ENCODE measurements at regions of chr2 and their contacts with region 1.

Region 1: DNA sequence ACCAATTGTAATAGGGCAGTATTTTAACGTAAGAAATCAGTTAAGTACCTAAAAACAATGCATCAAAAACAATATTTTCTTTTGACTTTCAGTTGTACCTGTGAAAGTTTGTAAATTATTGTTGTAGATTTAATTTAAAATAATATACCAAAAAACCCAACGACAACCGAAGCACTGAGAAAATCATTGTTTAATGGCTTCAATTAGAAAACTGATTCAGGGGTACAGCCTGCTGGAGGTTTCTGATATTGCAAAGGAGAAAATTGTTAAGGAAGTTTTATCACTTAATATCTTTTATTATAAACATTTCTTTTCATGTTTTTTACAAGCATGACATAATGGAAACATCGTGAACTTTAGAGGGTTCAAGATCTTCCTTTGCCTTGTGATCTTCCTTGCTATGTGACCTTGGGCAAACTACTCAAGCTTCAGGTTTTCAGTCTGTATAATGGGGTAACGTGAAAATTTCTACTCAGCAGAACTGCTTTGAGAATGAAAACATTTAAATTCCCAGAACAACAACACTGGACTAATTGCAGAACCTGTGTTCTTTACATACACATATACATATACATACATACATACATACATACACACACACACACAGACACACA is 76.3 kb upstream of the GLS start:
- DNase-seq: peak; percentile 74
- H3K4me3 ChIP-seq: no peak overlapping the region
- H3K27ac ChIP-seq: no peak overlapping the region
- H3K4me1 ChIP-seq: peaks cover 2% of the 10 kb centered on the region
- H3K27me3 ChIP-seq: peaks cover 0 to 3% of the 10 kb centered on the region in 2 experiments
- CTCF ChIP-seq: peak; percentile 36 to 40
- POLR2A ChIP-seq: no peak

Region 2: GRCh38 chr2:189318761-189319160 is 1485.5 kb before region 1 on chr2:
- CTCF ChIA-PET with region 1: no interaction called
- POLR2A ChIA-PET with region 1: no interaction called
- dilution Hi-C with region 1: no loop called
- intact Hi-C with region 1: no loop called
- DNase-seq: no peak
- H3K4me3 ChIP-seq: no peak overlapping the region
- H3K27ac ChIP-seq: no peak overlapping the region
- H3K4me1 ChIP-seq: no peaks in the 10 kb centered on the region
- H3K27me3 ChIP-seq: no peaks in the 10 kb centered on the region
- CTCF ChIP-seq: no peak
- POLR2A ChIP-seq: no peak

Region 3: GRCh38 chr2:190334479-190335224 is 469.6 kb before region 1 on chr2:
- CTCF ChIA-PET with region 1: no interaction called
- POLR2A ChIA-PET with region 1: no interaction called
- dilution Hi-C with region 1: no loop called
- intact Hi-C with region 1: loop called (anchors 5 kb)
- DNase-seq: peak; percentile 87
- H3K4me3 ChIP-seq: peak overlapping the region in 1 of 3 experiments; percentile 41
- H3K27ac ChIP-seq: peak overlapping the region; percentile 77
- H3K4me1 ChIP-seq: peaks cover 25% of the 10 kb centered on the region
- H3K27me3 ChIP-seq: no peaks in the 10 kb centered on the region
- CTCF ChIP-seq: no peak
- POLR2A ChIP-seq: peak; percentile 49

Region 4: DNA sequence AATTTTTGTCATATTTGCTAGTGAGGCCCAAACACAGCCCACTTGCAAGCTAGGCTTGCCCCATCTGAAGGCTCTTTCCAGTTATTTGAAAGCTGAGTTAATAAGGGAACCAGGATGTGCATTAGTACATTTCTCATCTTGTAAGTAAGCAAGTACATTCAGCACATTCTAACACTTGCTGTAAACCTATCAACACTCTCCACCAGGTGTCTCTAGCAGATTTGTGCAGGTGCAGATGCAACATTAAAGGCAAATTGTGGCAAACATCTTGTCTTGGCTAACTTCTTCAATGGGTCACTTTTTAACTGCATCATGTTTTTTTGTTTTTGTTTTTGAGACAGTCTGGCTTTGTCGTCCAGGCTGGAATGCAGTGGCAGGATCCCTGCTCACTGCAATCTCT is 421.4 kb before region 1 on chr2:
- CTCF ChIA-PET with region 1: no interaction called
- POLR2A ChIA-PET with region 1: no interaction called
- dilution Hi-C with region 1: no loop called
- intact Hi-C with region 1: loop called (anchors 1 kb)
- DNase-seq: peak; percentile 66
- H3K4me3 ChIP-seq: no peak overlapping the region
- H3K27ac ChIP-seq: no peak overlapping the region
- H3K4me1 ChIP-seq: no peaks in the 10 kb centered on the region
- H3K27me3 ChIP-seq: peaks cover 0 to 4% of the 10 kb centered on the region in 2 experiments
- CTCF ChIP-seq: peak; percentile 21 to 35
- POLR2A ChIP-seq: no peak

Region 5: GRCh38 chr2:190511104-190511503 is 293.2 kb before region 1 on chr2:
- CTCF ChIA-PET with region 1: interaction called, 7 read pairs
- POLR2A ChIA-PET with region 1: no interaction called
- dilution Hi-C with region 1: no loop called
- intact Hi-C with region 1: loop called (anchors 5 kb)
- DNase-seq: peak; percentile 65
- H3K4me3 ChIP-seq: no peak overlapping the region
- H3K27ac ChIP-seq: no peak overlapping the region
- H3K4me1 ChIP-seq: no peaks in the 10 kb centered on the region
- H3K27me3 ChIP-seq: no peaks in the 10 kb centered on the region
- CTCF ChIP-seq: peak; percentile 20 to 30
- POLR2A ChIP-seq: no peak

Region 6: DNA sequence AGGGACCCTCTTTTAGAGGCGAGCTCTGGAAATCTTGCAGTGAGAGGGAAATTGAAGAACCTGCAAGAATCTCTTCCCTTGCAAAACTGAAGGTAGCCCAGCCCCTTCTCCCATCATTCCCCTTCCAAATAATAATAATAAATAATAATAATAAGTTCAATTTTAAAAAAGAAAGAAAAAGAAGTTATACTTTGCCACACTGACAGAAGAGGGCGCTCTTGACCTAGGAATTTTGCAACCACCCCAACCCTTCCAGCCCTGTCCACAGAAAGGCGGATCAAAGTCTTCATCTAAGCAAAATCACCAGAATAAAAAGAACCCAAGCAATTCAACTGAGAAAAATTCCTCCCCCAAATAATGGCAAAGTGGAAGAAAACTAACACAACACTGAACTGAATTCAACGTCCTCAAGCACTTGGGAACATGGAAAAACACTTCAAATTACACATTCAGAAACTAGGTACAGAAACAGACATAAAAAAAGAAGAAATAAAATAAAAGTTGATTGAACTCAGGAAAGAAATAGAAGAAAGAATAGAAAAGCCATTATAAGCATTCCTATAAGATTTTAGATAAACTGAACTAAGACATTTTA is 22.6 kb before region 1 on chr2:
- CTCF ChIA-PET with region 1: interaction called, 51 read pairs
- POLR2A ChIA-PET with region 1: no interaction called
- dilution Hi-C with region 1: no loop called
- intact Hi-C with region 1: loop called (anchors 1 kb)
- DNase-seq: peak; percentile 76
- H3K4me3 ChIP-seq: no peak overlapping the region
- H3K27ac ChIP-seq: no peak overlapping the region
- H3K4me1 ChIP-seq: no peaks in the 10 kb centered on the region
- H3K27me3 ChIP-seq: peaks cover 0 to 2% of the 10 kb centered on the region in 2 experiments
- CTCF ChIP-seq: peak; percentile 36 to 53
- POLR2A ChIP-seq: no peak

Region 7: GRCh38 chr2:190791347-190791975 is 12.8 kb before region 1 on chr2:
- CTCF ChIA-PET with region 1: interaction called, 18 read pairs
- POLR2A ChIA-PET with region 1: no interaction called
- dilution Hi-C with region 1: no loop called
- intact Hi-C with region 1: loop called (anchors 1 kb)
- DNase-seq: peak; percentile 93
- H3K4me3 ChIP-seq: peak overlapping the region in 1 of 3 experiments; percentile 49
- H3K27ac ChIP-seq: peak overlapping the region; percentile 92
- H3K4me1 ChIP-seq: peaks cover 45% of the 10 kb centered on the region
- H3K27me3 ChIP-seq: no peaks in the 10 kb centered on the region
- CTCF ChIP-seq: no peak
- POLR2A ChIP-seq: no peak